ENCODE measurements at regions of chr4 and their contacts with region 1.

Region 1: DNA sequence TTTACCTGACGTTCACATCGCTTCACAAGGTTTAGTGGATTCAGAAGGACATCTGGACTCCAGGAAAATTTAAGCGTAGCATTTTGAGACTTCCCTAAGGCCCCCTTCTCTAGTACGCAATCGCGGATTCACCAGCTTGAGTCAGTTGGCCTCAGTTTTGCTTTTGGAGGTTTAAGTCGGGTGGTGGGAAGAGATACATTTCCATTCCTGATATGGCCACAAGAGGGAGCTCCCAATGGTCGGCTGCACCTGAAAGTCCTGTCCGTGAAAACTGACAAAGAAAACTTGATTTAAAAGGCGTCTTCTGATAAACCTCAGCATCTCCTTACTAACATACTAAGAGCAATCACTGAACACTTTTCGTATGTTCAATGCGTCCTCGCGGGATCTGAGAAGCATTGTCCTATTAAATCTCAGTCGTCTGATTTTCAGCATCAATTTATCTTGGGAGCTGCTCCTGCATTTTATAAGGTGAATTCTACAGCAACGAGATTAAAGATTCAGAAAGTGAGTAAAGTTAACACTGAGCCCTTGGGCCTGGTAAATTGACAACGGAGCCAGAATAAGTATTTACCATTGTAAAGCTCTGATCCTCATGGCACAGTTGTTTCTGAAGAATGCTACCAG is 50.6 kb downstream of the LGI2 start:
- DNase-seq: peak in 13 of 14 experiments; percentile 4 to 77 (median 18)
- ATAC-seq: no peak
- H3K4me3 ChIP-seq: peak overlapping the region; percentile 10
- H3K4me3 Mint-ChIP-seq: peak overlapping the region; percentile 72
- H3K27ac ChIP-seq: no peak overlapping the region
- H3K27ac Mint-ChIP-seq: no peak overlapping the region
- H3K4me1 ChIP-seq: peaks cover 7% of the 10 kb centered on the region
- H3K4me1 Mint-ChIP-seq: peaks cover 6% of the 10 kb centered on the region
- H3K27me3 ChIP-seq: peaks cover 4 to 9% of the 10 kb centered on the region in 2 experiments
- H3K27me3 Mint-ChIP-seq: peaks cover 38% of the 10 kb centered on the region
- CTCF ChIP-seq: peak; percentile 91

Region 2: GRCh38 chr4:24743931-24744330 is 236.2 kb before region 1 on chr4:
- CTCF ChIA-PET with region 1: no interaction called
- POLR2A ChIA-PET with region 1: no interaction called
- intact Hi-C with region 1: no loop called
- DNase-seq: no peak
- ATAC-seq: no peak
- H3K4me3 ChIP-seq: no peak overlapping the region
- H3K4me3 Mint-ChIP-seq: no peak overlapping the region
- H3K27ac ChIP-seq: no peak overlapping the region
- H3K27ac Mint-ChIP-seq: no peak overlapping the region
- H3K4me1 ChIP-seq: no peaks in the 10 kb centered on the region
- H3K4me1 Mint-ChIP-seq: no peaks in the 10 kb centered on the region
- H3K27me3 ChIP-seq: no peaks in the 10 kb centered on the region
- H3K27me3 Mint-ChIP-seq: peaks cover 3% of the 10 kb centered on the region
- CTCF ChIP-seq: no peak

Region 3: GRCh38 chr4:24991015-24991414 is 10.8 kb after region 1 on chr4:
- CTCF ChIA-PET with region 1: interaction called, 12 read pairs
- POLR2A ChIA-PET with region 1: no interaction called
- intact Hi-C with region 1: no loop called
- DNase-seq: no peak
- ATAC-seq: no peak
- H3K4me3 ChIP-seq: no peak overlapping the region
- H3K4me3 Mint-ChIP-seq: no peak overlapping the region
- H3K27ac ChIP-seq: no peak overlapping the region
- H3K27ac Mint-ChIP-seq: no peak overlapping the region
- H3K4me1 ChIP-seq: no peaks in the 10 kb centered on the region
- H3K4me1 Mint-ChIP-seq: no peaks in the 10 kb centered on the region
- H3K27me3 ChIP-seq: no peaks in the 10 kb centered on the region
- H3K27me3 Mint-ChIP-seq: no peaks in the 10 kb centered on the region
- CTCF ChIP-seq: no peak

Region 4: GRCh38 chr4:25144870-25145481 is 164.8 kb after region 1 on chr4:
- CTCF ChIA-PET with region 1: no interaction called
- POLR2A ChIA-PET with region 1: no interaction called
- intact Hi-C with region 1: loop called (anchors 2 to 10 kb)
- DNase-seq: peak in 3 of 14 experiments; percentile 19 to 35 (median 19)
- ATAC-seq: no peak
- H3K4me3 ChIP-seq: no peak overlapping the region
- H3K4me3 Mint-ChIP-seq: no peak overlapping the region
- H3K27ac ChIP-seq: no peak overlapping the region
- H3K27ac Mint-ChIP-seq: no peak overlapping the region
- H3K4me1 ChIP-seq: no peaks in the 10 kb centered on the region
- H3K4me1 Mint-ChIP-seq: no peaks in the 10 kb centered on the region
- H3K27me3 ChIP-seq: no peaks in the 10 kb centered on the region
- H3K27me3 Mint-ChIP-seq: no peaks in the 10 kb centered on the region
- CTCF ChIP-seq: peak; percentile 47

Region 5: DNA sequence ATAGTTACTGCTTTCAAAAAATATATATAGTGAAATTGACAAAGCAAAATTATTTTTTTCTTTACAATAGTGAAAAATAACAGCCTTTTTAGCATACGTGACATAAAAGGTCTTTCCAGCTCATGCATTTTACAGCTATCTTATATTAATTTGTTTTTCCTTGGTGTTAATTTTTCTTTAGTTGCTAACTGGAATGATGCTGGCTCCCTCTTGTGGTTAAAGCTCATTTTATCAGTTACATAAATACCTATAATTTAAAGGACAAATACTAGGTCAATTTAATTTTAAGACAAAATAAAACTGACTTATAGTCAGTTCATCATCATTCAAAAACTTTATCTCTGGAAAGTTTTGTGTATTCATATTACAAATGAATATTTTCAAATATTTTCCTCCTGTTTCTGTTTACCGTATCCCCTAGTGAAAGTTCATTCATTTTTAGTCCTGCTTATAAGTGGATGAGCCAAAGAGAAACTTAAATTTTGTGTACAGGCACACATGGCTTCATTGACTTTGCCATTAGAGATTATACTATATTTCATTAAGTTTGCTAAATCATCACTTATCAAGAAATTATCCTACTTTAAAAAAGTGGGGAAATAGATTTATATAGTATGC is 386.9 kb after region 1 on chr4:
- CTCF ChIA-PET with region 1: interaction called, 7 read pairs
- POLR2A ChIA-PET with region 1: interaction called, 7 read pairs
- intact Hi-C with region 1: loop called in 1 of 2 experiments (anchors 1 kb)
- DNase-seq: peak in 3 of 14 experiments; percentile 47 to 63 (median 59)
- ATAC-seq: no peak
- H3K4me3 ChIP-seq: no peak overlapping the region
- H3K4me3 Mint-ChIP-seq: no peak overlapping the region
- H3K27ac ChIP-seq: no peak overlapping the region
- H3K27ac Mint-ChIP-seq: no peak overlapping the region
- H3K4me1 ChIP-seq: no peaks in the 10 kb centered on the region
- H3K4me1 Mint-ChIP-seq: no peaks in the 10 kb centered on the region
- H3K27me3 ChIP-seq: no peaks in the 10 kb centered on the region
- H3K27me3 Mint-ChIP-seq: no peaks in the 10 kb centered on the region
- CTCF ChIP-seq: peak; percentile 72

Region 6: GRCh38 chr4:25767877-25768725 is 787.9 kb after region 1 on chr4:
- CTCF ChIA-PET with region 1: no interaction called
- POLR2A ChIA-PET with region 1: no interaction called
- intact Hi-C with region 1: loop called in 1 of 2 experiments (anchors 5 kb)
- DNase-seq: peak in 3 of 14 experiments; percentile 24 to 40 (median 27)
- ATAC-seq: no peak
- H3K4me3 ChIP-seq: no peak overlapping the region
- H3K4me3 Mint-ChIP-seq: no peak overlapping the region
- H3K27ac ChIP-seq: no peak overlapping the region
- H3K27ac Mint-ChIP-seq: no peak overlapping the region
- H3K4me1 ChIP-seq: no peaks in the 10 kb centered on the region
- H3K4me1 Mint-ChIP-seq: no peaks in the 10 kb centered on the region
- H3K27me3 ChIP-seq: no peaks in the 10 kb centered on the region
- H3K27me3 Mint-ChIP-seq: no peaks in the 10 kb centered on the region
- CTCF ChIP-seq: no peak